ENCODE measurements at regions of chr4 and their contacts with region 1.

Region 1: DNA sequence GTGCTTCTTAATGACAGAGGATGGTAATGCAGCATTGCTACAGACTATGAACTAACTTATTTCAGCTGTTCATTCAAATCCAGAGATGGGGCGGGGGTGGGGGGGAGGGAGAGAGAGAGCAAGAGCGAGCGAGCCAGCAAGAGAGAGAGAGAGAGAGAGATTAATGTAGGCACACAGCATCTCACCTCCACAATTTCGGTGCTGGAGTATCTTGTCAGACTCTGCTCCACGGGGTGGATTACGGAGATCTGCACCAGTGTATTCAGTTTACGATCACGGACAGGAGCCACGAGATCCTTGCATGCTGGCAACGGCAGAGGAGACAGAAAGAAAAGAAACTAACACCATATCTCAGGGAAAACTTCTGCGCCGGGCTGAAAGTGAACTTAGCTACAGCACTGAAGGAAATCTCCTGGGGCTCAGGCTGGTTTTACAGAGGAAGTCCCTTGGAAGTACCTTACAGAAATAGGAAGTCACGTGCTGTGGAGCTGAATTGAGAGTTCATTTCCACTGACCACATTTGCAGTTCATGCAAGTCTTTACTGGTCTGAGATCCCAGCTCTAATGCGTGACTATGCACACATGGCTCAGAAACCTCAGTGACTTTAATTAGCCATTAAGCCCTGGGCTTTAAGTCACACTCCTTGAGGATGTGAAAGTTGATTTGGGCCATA is 440.9 kb downstream of the INPP4B start:
- DNase-seq: peak; percentile 64
- H3K4me3 Mint-ChIP-seq: peak overlapping the region; percentile 96
- H3K27ac Mint-ChIP-seq: peak overlapping the region; percentile 99
- H3K4me1 Mint-ChIP-seq: peaks cover 45% of the 10 kb centered on the region
- H3K27me3 Mint-ChIP-seq: no peaks in the 10 kb centered on the region

Region 2: DNA sequence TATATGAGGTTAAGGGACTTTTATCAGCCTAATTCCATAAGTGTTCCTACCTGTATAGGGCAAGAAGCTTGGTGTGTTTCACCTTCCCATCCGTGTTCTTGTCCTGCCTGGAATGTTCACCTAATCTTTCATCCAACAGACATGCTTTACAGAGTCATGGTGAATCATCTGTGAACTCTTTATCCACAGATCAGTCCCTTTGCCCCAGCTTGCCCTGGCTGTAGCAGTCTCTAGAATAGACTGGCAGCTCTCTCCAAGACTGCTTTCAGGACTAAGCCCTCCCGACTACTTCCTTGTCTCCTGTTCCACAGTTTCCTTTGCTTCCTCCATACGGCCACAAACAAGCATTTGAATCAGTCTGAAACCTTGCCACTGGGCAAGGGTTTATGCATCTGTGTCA is 946.7 kb before region 1 on chr4:
- intact Hi-C with region 1: no loop called
- DNase-seq: no peak
- H3K4me3 Mint-ChIP-seq: no peak overlapping the region
- H3K27ac Mint-ChIP-seq: no peak overlapping the region
- H3K4me1 Mint-ChIP-seq: no peaks in the 10 kb centered on the region
- H3K27me3 Mint-ChIP-seq: no peaks in the 10 kb centered on the region

Region 3: GRCh38 chr4:142126890-142127497 is 278.2 kb before region 1 on chr4:
- intact Hi-C with region 1: loop called (anchors 10 kb)
- DNase-seq: peak; percentile 24
- H3K4me3 Mint-ChIP-seq: no peak overlapping the region
- H3K27ac Mint-ChIP-seq: no peak overlapping the region
- H3K4me1 Mint-ChIP-seq: peaks cover 20% of the 10 kb centered on the region
- H3K27me3 Mint-ChIP-seq: no peaks in the 10 kb centered on the region

Region 4: GRCh38 chr4:142293536-142293935 is 111.6 kb before region 1 on chr4:
- intact Hi-C with region 1: no loop called
- DNase-seq: no peak
- H3K4me3 Mint-ChIP-seq: no peak overlapping the region
- H3K27ac Mint-ChIP-seq: no peak overlapping the region
- H3K4me1 Mint-ChIP-seq: peaks cover 32% of the 10 kb centered on the region
- H3K27me3 Mint-ChIP-seq: no peaks in the 10 kb centered on the region

Region 5: DNA sequence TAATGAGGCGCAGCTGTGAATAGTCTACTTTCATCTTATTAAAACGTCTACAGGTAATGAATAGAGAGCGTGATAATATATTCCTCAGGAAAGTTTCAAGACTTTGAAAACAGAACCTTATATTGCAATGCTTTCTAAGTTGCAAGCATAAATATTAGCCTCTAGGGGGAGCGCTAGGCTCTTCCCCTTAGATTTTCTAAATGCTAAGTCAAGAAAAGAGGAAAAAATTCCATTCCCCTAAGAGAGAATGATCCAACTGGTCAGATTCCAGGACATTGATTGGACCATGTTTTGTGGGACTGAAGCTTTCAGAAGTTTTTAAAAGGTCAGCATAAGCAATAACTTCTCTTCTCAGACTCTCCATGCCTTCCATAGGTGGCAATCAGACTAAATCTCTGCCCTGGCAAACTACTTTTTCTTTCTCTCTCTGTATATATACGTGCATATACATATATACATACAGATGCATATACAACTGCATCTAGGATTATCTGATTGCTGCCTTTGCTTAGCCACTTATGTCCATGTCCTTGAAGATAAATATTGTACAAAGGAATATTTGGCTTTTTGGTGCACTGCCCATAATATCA is 51.9 kb before region 1 on chr4:
- intact Hi-C with region 1: loop called (anchors 1 kb)
- DNase-seq: no peak
- H3K4me3 Mint-ChIP-seq: peak overlapping the region; percentile 15
- H3K27ac Mint-ChIP-seq: peak overlapping the region; percentile 88
- H3K4me1 Mint-ChIP-seq: peaks cover 89% of the 10 kb centered on the region
- H3K27me3 Mint-ChIP-seq: no peaks in the 10 kb centered on the region

Region 6: GRCh38 chr4:142416711-142417275 is 11.6 kb after region 1 on chr4:
- intact Hi-C with region 1: loop called (anchors 1 kb)
- DNase-seq: no peak
- H3K4me3 Mint-ChIP-seq: peak overlapping the region; percentile 76
- H3K27ac Mint-ChIP-seq: peak overlapping the region; percentile 98
- H3K4me1 Mint-ChIP-seq: peaks cover 49% of the 10 kb centered on the region
- H3K27me3 Mint-ChIP-seq: no peaks in the 10 kb centered on the region

Region 7: DNA sequence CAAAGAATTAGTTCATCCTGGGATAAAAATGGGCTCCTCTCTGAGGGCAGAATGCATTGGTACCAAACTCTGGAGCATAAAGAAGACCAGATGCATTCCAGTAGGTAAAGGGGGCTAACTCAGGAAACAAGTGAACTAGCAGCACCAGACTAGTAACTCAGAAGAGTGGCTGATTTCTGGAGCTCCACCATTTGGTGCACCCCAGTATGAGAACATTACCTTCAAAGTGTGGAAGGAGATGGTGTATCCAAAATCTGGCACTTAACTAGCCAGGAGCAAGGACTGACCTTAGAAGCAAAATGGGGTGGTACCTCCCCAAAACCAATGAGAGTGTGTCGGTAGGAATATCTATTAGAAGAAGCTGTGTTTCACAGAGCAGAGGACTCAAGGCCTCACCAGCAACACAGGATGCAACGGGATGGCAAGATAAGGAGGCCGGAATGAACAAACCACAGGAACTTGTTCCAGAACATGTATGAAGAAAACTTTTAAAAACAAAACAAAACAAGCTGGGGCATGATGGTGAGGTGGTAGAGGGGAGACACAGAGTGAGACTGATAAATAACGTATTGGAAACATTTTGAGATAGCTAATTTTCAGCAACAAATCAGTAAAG is 298.6 kb after region 1 on chr4:
- intact Hi-C with region 1: loop called (anchors 5 kb)
- DNase-seq: peak; percentile 53
- H3K4me3 Mint-ChIP-seq: no peak overlapping the region
- H3K27ac Mint-ChIP-seq: no peak overlapping the region
- H3K4me1 Mint-ChIP-seq: peaks cover 29% of the 10 kb centered on the region
- H3K27me3 Mint-ChIP-seq: no peaks in the 10 kb centered on the region

Region 8: GRCh38 chr4:143513306-143514168 is 1108.4 kb after region 1 on chr4 and contains the start of gene SMARCA5:
- intact Hi-C with region 1: loop called (anchors 5 kb)
- DNase-seq: peak; percentile 97
- H3K4me3 Mint-ChIP-seq: peak within 1 kb of the TSS; percentile 98
- H3K27ac Mint-ChIP-seq: peak within 1 kb of the TSS; percentile 90
- H3K4me1 Mint-ChIP-seq: peaks cover 23% of the 10 kb centered on the region
- H3K27me3 Mint-ChIP-seq: peaks cover 16% of the 10 kb centered on the region
- total RNA-seq, gene SMARCA5: 56.6 and 57.8 TPM in 2 replicates

Measured in activated T-helper 2 cell treated with anti-CD3 and anti-CD28 coated beads, Interferon-gamma antibody, Interleukin-2, Interleukin-4, amounts not matched to agents 10 μg/mL and 5 μg/mL and 100 μg/mL, durations not matched to agents 14 hours and 24 hours and 36 hours (primary cell).